CD14-positive monocyte (primary cell): ENCODE measurements at regions of chr2 and their contacts with region 1.

Region 1: DNA sequence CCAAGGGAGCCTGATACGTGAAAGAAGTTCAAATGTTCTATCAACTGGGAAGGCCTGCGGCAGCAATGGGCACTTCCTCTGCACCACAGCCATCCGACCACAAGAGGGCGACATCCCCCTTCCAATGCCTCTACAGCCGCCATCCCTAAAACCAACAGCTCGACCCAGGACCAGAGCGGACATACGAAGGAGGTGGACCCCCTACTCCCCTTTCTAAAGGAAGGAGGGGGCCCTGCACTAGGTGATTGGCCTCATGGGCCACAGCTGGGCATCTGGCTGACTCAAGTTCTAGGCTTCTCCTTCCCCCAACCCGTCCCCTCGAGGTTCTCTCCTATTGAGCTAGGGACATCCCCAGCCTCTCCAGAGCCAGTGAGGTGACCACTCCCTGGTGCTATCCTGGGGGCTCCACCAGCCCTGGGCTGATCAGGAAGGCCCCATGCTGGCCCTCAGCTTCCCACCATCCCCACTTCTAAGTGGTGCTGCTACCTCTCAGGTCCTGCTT is 217.2 kb downstream of the TNS1 start:
- DNase-seq: peak; percentile 66 to 73 (median 70)
- H3K4me3 ChIP-seq: no peak overlapping the region
- H3K4me3 Mint-ChIP-seq: peak overlapping the region in 1 of 2 donors; percentile 33
- H3K27ac ChIP-seq: no peak overlapping the region
- H3K27ac Mint-ChIP-seq: no peak overlapping the region
- H3K4me1 ChIP-seq: peaks cover 16 to 17% of the 10 kb centered on the region in 2 donors
- H3K4me1 Mint-ChIP-seq: peaks cover 25% of the 10 kb centered on the region
- H3K27me3 ChIP-seq: no peaks in the 10 kb centered on the region
- H3K27me3 Mint-ChIP-seq: peaks cover 8 to 13% (median 11%) of the 10 kb centered on the region in 3 donors
- CTCF ChIP-seq: peak; percentile 94

Region 2: GRCh38 chr2:217846321-217846743 is 60.7 kb after region 1 on chr2:
- intact Hi-C with region 1: loop called (anchors 5 to 10 kb)
- DNase-seq: peak; percentile 46 to 71 (median 55)
- H3K4me3 ChIP-seq: no peak overlapping the region
- H3K4me3 Mint-ChIP-seq: no peak overlapping the region
- H3K27ac ChIP-seq: no peak overlapping the region
- H3K27ac Mint-ChIP-seq: peak overlapping the region in 1 of 7 donors; percentile 21
- H3K4me1 ChIP-seq: peaks cover 21 to 29% of the 10 kb centered on the region in 2 donors
- H3K4me1 Mint-ChIP-seq: peaks cover 29% of the 10 kb centered on the region
- H3K27me3 ChIP-seq: peaks cover 0 to 14% of the 10 kb centered on the region in 2 donors
- H3K27me3 Mint-ChIP-seq: peaks cover 15 to 39% (median 19%) of the 10 kb centered on the region in 3 donors
- CTCF ChIP-seq: no peak

Region 3: GRCh38 chr2:217886720-217887309 is 101.2 kb after region 1 on chr2:
- intact Hi-C with region 1: loop called (anchors 2 to 5 kb)
- DNase-seq: peak; percentile 49 to 66 (median 53)
- H3K4me3 ChIP-seq: peak overlapping the region in 1 of 3 experiments; percentile 3
- H3K4me3 Mint-ChIP-seq: no peak overlapping the region
- H3K27ac ChIP-seq: peak overlapping the region in 1 of 2 donors; percentile 34
- H3K27ac Mint-ChIP-seq: peak overlapping the region in 6 of 7 donors; percentile 42 to 85 (median 70)
- H3K4me1 ChIP-seq: peaks cover 18 to 22% of the 10 kb centered on the region in 2 donors
- H3K4me1 Mint-ChIP-seq: peaks cover 23% of the 10 kb centered on the region
- H3K27me3 ChIP-seq: no peaks in the 10 kb centered on the region
- H3K27me3 Mint-ChIP-seq: peaks cover 1 to 7% (median 2%) of the 10 kb centered on the region in 3 donors
- CTCF ChIP-seq: peak; percentile 78

Region 4: DNA sequence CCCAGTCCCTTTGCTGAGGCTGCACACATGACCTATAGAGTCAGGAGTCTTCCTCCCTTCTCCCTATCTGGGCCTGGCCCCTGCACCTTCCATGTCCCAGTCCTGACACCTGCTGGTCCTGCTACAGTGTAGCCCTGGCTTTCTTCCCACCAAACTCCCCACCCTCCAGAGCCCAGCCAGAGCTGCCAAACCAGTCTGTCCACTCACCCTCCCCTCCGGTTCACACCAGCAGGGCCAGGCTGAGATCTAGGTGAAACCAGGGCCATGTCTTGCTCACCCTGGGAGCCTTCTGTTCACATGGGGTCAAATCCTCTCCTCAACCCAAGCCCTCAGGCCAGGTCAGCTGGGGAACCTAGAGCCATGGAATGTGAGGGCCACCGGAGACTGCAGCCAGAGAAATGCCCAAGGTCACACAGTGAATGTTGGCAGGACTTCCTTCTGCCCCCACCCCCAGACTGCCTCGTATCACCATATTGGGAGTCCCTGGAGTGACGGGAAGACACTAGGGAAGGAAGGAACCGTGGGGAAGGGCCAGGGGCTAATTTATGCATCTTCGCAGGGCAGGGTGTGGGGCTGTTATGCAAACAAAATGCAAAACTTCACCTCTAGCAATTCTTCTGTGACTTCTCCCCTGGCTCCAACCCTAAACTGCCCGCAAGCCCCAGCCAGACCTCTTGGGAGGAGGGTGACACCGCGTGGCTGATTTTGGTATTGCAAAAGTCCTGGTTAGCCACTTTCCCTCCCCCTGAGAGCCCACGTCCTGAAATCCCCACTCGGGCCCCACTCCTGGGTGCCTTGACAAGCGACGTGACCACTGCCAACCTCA is 202.6 kb after region 1 on chr2:
- intact Hi-C with region 1: loop called (anchors 1 to 2 kb)
- DNase-seq: peak; percentile 65 to 80 (median 78)
- H3K4me3 ChIP-seq: no peak overlapping the region
- H3K4me3 Mint-ChIP-seq: no peak overlapping the region
- H3K27ac ChIP-seq: no peak overlapping the region
- H3K27ac Mint-ChIP-seq: peak overlapping the region in 1 of 7 donors; percentile 68
- H3K4me1 ChIP-seq: peaks cover under 1 to 1% of the 10 kb centered on the region in 2 donors
- H3K4me1 Mint-ChIP-seq: peaks cover 3% of the 10 kb centered on the region
- H3K27me3 ChIP-seq: no peaks in the 10 kb centered on the region
- H3K27me3 Mint-ChIP-seq: peaks cover 0 to 2% (median 0%) of the 10 kb centered on the region in 3 donors
- CTCF ChIP-seq: peak; percentile 93

Region 5: DNA sequence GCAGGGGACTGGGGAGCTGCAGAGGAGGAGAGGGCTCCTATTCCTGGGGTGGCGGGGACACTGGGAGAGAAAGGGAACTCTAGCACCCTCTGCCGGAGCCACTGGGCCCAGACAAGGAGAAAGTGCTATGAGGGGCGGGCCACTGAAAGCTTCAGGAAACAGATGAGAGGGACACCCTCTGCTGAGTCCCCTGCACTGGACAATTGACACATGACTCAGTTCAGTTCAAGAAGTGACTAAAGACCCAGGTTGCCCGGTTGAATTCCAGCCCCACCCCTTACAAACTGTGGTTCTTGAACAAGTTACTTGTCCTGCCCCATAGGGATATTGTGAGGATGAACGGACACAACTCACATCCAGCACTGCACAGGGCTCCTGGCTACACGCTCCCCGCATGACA is 288.4 kb after region 1 on chr2:
- intact Hi-C with region 1: loop called (anchors 2 to 5 kb)
- DNase-seq: peak; percentile 53 to 64 (median 58)
- H3K4me3 ChIP-seq: no peak overlapping the region
- H3K4me3 Mint-ChIP-seq: no peak overlapping the region
- H3K27ac ChIP-seq: no peak overlapping the region
- H3K27ac Mint-ChIP-seq: no peak overlapping the region
- H3K4me1 ChIP-seq: peaks cover 17 to 29% of the 10 kb centered on the region in 2 donors
- H3K4me1 Mint-ChIP-seq: peaks cover 28% of the 10 kb centered on the region
- H3K27me3 ChIP-seq: no peaks in the 10 kb centered on the region
- H3K27me3 Mint-ChIP-seq: peaks cover 0 to 3% (median 1%) of the 10 kb centered on the region in 3 donors
- CTCF ChIP-seq: peak; percentile 81